Naive thymus-derived CD4-positive, alpha-beta T cell (primary cell): ENCODE measurements at regions of chr3 and their contacts with region 1.

Region 1: DNA sequence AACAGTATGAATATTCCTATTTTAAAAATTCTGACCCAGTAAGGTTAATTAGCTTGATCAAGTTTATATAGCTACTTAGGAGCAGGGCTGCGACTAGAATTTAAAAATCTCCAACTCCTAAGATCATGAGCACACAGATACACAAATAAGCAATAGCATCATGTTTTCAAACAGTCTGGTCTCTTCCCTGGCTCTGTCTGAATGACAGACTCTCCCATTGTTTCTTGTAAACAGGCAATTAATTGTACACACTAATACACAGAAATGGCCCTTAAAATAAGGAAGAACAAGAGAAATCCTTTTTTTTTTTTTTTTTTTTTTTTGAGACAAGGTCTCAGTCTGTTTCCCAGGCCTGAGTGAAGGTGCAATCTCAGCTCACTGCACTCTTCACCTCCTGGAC is 1064.4 kb upstream of the CFAP20DC start:
- DNase-seq: no peak
- ATAC-seq: no peak
- H3K4me3 ChIP-seq: no peak overlapping the region
- H3K4me3 Mint-ChIP-seq: no peak overlapping the region
- H3K27ac ChIP-seq: no peak overlapping the region
- H3K27ac Mint-ChIP-seq: no peak overlapping the region
- H3K4me1 ChIP-seq: no peaks in the 10 kb centered on the region
- H3K4me1 Mint-ChIP-seq: no peaks in the 10 kb centered on the region
- H3K27me3 ChIP-seq: no peaks in the 10 kb centered on the region
- H3K27me3 Mint-ChIP-seq: no peaks in the 10 kb centered on the region

Region 2: DNA sequence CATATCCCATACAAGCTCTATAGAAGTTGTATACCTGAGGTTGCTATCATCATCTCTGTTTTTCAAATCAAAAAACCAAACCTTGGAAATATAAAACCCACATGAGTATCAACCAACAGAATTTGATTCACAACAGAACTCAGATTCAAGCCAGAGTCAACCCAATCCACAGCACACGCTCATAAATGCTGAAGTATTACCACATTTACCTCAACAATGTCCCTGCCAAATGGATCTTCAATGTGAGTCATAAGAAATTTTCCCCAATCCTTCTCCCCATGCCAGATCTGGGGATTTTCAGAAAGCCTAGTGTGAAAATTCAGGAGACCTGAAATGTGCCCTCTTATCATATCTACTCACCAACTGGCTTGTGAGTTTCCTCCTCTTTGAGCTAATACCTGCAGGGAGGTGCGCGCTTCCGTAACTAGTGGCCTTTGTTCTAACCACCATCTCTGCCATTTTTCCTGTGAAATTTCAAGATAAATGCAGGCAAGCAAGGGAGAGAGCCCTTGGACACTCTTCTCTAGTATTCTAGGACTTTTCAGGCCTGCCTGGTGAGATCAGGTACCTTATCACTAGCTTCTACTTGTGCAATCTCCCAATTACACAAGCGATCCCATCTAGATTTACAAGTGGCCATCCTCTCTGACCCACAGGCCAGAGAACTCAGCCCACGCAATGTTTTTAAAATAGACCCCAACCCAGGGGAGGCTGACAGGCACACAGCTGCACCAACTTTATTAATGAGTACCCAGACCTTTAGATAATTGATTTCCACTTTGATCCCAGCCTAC is 12.5 kb after region 1 on chr3:
- CTCF ChIA-PET with region 1: no interaction called
- POLR2A ChIA-PET with region 1: no interaction called
- intact Hi-C with region 1: loop called in 1 of 2 experiments (anchors 2 kb)
- DNase-seq: no peak
- ATAC-seq: no peak
- H3K4me3 ChIP-seq: no peak overlapping the region
- H3K4me3 Mint-ChIP-seq: no peak overlapping the region
- H3K27ac ChIP-seq: no peak overlapping the region
- H3K27ac Mint-ChIP-seq: peak overlapping the region in 2 of 9 donors; percentile 0 to 23
- H3K4me1 ChIP-seq: no peaks in the 10 kb centered on the region
- H3K4me1 Mint-ChIP-seq: peaks cover 0 to 14% (median 10%) of the 10 kb centered on the region in 7 donors
- H3K27me3 ChIP-seq: no peaks in the 10 kb centered on the region
- H3K27me3 Mint-ChIP-seq: no peaks in the 10 kb centered on the region

Region 3: DNA sequence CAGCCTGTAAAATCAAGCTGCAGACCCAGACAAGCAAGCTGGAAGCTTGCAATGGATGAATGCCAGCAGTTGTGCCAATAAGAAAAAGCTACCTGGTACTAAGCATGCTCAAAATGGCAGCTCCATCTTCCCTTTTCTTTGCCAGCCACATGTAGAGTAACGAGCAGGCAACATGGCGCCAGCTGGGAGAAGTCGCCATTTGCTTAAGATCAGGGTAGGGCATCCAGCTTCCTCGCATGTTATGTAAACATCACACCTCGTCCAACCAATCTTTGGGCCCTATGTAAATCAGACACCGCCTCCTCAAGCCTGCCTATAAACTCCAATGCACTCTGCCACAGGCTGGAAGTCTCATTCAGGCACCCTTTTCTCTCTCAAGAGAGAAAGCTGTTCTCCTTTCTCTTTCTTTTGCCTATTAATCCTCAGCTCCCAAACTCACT is 163.2 kb after region 1 on chr3:
- CTCF ChIA-PET with region 1: no interaction called
- POLR2A ChIA-PET with region 1: no interaction called
- intact Hi-C with region 1: no loop called
- DNase-seq: no peak
- ATAC-seq: no peak
- H3K4me3 ChIP-seq: no peak overlapping the region
- H3K4me3 Mint-ChIP-seq: no peak overlapping the region
- H3K27ac ChIP-seq: no peak overlapping the region
- H3K27ac Mint-ChIP-seq: no peak overlapping the region
- H3K4me1 ChIP-seq: no peaks in the 10 kb centered on the region
- H3K4me1 Mint-ChIP-seq: no peaks in the 10 kb centered on the region
- H3K27me3 ChIP-seq: no peaks in the 10 kb centered on the region
- H3K27me3 Mint-ChIP-seq: no peaks in the 10 kb centered on the region

Region 4: DNA sequence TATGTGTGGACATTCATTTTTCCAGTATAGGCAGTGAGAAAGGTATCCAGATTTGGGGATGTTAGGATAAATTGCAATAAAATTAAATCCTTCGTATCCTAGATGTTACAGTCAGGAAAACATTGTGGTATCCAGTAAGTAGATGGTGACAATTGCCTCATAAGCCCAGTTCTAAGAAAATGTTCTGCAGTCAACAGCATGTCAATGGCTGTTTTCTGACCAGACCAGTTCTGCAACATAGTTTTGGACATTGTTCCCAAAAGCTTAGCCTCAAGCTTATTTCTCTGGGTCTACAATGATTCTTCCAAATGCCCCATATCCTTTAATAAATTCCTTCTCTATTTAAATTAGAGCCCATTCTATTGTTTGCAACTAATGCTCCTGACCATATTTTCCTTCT is 656.3 kb after region 1 on chr3:
- CTCF ChIA-PET with region 1: no interaction called
- POLR2A ChIA-PET with region 1: no interaction called
- intact Hi-C with region 1: no loop called
- DNase-seq: no peak
- ATAC-seq: no peak
- H3K4me3 ChIP-seq: no peak overlapping the region
- H3K4me3 Mint-ChIP-seq: no peak overlapping the region
- H3K27ac ChIP-seq: no peak overlapping the region
- H3K27ac Mint-ChIP-seq: no peak overlapping the region
- H3K4me1 ChIP-seq: no peaks in the 10 kb centered on the region
- H3K4me1 Mint-ChIP-seq: no peaks in the 10 kb centered on the region
- H3K27me3 ChIP-seq: no peaks in the 10 kb centered on the region
- H3K27me3 Mint-ChIP-seq: no peaks in the 10 kb centered on the region